Gastrocnemius medialis (tissue), 4 donors: ENCODE measurements at regions of chr13 and their contacts with region 1.

Region 1: GRCh38 chr13:102845630-102846260 is at the start of gene ERCC5:
- DNase-seq: peak; percentile 85 to 91
- ATAC-seq: peak; percentile 90 to 92
- H3K4me3 ChIP-seq: peak within 1 kb of the TSS; percentile 75 to 94 (median 92)
- H3K27ac ChIP-seq: peak within 1 kb of the TSS; percentile 92 to 98 (median 96)
- H3K4me1 ChIP-seq: peaks cover 19 to 21% of the 10 kb centered on the region in 2 donors
- H3K27me3 ChIP-seq: no peaks in the 10 kb centered on the region
- CTCF ChIP-seq: peak in 1 of 5 experiments; percentile 42
- POLR2A ChIP-seq: peak; percentile 63 to 70
- total RNA-seq, gene ERCC5: 43.5 to 77.7 (median 46.8) TPM

Region 2: GRCh38 chr13:102207680-102208342 is 637.9 kb before region 1 on chr13:
- in situ Hi-C with region 1: no loop called
- intact Hi-C with region 1: loop called (anchors 5 kb)
- DNase-seq: no peak
- ATAC-seq: no peak
- H3K4me3 ChIP-seq: no peak overlapping the region
- H3K27ac ChIP-seq: no peak overlapping the region
- H3K4me1 ChIP-seq: no peaks in the 10 kb centered on the region
- H3K27me3 ChIP-seq: no peaks in the 10 kb centered on the region
- CTCF ChIP-seq: no peak
- POLR2A ChIP-seq: no peak

Region 3: DNA sequence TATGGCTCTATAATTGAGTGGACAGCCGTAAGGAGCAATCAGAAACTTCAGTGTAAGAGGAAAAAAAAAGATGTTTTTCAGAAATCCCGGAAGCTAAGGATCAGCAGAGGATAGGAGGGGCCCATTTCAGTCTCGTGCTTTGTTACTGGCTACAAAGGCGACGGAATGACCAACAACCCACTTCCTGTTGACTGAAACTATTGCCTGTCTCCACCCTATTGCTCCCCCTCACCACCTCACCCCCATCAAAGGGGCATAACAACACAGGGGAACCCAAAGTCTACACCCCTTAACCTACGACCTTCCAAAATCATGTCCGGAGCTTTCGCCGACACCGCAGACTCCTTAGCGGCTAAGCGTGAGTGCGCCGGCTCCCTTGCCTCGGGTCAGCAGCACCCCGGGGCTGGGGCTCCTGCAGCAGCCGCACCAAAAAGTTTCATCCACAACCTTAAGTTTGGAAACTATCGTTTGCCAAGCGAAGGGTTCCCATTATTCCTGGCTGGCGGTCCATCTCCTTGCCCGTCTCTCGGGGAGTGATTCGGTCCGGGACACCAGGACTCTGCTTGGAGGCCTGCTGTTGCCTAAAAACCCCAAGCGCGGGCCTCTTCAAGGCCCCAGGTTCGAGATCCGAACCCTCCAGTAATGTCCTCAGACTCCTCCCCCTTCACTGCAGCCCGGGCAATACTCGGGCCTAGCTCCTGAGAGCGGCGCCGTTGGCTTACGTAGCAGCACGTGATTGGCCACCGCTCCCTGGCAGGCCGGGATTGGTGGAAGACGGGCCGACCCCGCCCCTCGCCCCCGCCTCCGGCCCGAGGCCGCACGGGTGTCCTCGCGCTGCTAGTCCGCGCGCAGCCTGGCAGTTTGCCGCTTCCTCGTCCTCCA is 249.4 kb before region 1 on chr13 and contains the start of gene TPP2:
- in situ Hi-C with region 1: loop called in 1 of 4 experiments (anchors 5 kb)
- intact Hi-C with region 1: loop called (anchors 1 kb)
- DNase-seq: peak; percentile 99
- ATAC-seq: peak; percentile 88 to 89
- H3K4me3 ChIP-seq: peak within 1 kb of the TSS; percentile 63 to 99 (median 86)
- H3K27ac ChIP-seq: peak within 1 kb of the TSS; percentile 93 to 100 (median 96)
- H3K4me1 ChIP-seq: peaks cover 42 to 48% of the 10 kb centered on the region in 2 donors
- H3K27me3 ChIP-seq: no peaks in the 10 kb centered on the region
- CTCF ChIP-seq: peak in 1 of 5 experiments; percentile 8
- POLR2A ChIP-seq: peak; percentile 92
- total RNA-seq, gene TPP2: 38.2 to 78.2 (median 68.1) TPM

Region 4: GRCh38 chr13:102724923-102725322 is 120.8 kb before region 1 on chr13:
- in situ Hi-C with region 1: no loop called
- intact Hi-C with region 1: loop called (anchors 2 kb)
- DNase-seq: no peak
- ATAC-seq: peak; percentile 37 to 67
- H3K4me3 ChIP-seq: no peak overlapping the region
- H3K27ac ChIP-seq: no peak overlapping the region
- H3K4me1 ChIP-seq: peaks cover 9 to 11% of the 10 kb centered on the region in 2 donors
- H3K27me3 ChIP-seq: no peaks in the 10 kb centered on the region
- CTCF ChIP-seq: peak; percentile 56 to 73 (median 66)
- POLR2A ChIP-seq: no peak

Region 5: DNA sequence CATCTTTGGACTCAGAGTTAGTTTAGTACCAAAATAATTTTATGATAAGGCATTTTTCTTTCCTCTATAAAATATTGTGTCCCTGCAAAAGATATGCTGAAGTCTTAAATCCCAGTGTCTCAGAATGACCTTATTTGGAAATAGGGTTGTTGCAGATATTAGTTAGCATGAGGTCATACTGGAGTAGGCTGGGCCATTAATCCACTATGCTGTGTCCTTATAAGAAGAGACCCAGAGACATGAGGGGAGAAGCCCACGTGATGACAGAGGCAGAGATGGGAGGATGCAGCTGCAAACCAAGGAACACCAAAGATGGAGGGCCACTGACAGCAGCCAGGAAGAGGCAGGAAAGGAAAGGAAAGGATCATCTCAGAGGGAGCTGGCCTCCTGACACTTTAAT is 53.3 kb before region 1 on chr13:
- in situ Hi-C with region 1: no loop called
- intact Hi-C with region 1: no loop called
- DNase-seq: no peak
- ATAC-seq: no peak
- H3K4me3 ChIP-seq: no peak overlapping the region
- H3K27ac ChIP-seq: no peak overlapping the region
- H3K4me1 ChIP-seq: no peaks in the 10 kb centered on the region
- H3K27me3 ChIP-seq: no peaks in the 10 kb centered on the region
- CTCF ChIP-seq: no peak
- POLR2A ChIP-seq: no peak

Region 6: GRCh38 chr13:102863590-102863989 is 17.8 kb after region 1 on chr13:
- in situ Hi-C with region 1: no loop called
- intact Hi-C with region 1: loop called (anchors 2 kb)
- DNase-seq: peak; percentile 84 to 93
- ATAC-seq: peak; percentile 100
- H3K4me3 ChIP-seq: no peak overlapping the region
- H3K27ac ChIP-seq: peak overlapping the region; percentile 49 to 79 (median 68)
- H3K4me1 ChIP-seq: peaks cover 24 to 30% of the 10 kb centered on the region in 2 donors
- H3K27me3 ChIP-seq: no peaks in the 10 kb centered on the region
- CTCF ChIP-seq: no peak
- POLR2A ChIP-seq: no peak

Region 7: DNA sequence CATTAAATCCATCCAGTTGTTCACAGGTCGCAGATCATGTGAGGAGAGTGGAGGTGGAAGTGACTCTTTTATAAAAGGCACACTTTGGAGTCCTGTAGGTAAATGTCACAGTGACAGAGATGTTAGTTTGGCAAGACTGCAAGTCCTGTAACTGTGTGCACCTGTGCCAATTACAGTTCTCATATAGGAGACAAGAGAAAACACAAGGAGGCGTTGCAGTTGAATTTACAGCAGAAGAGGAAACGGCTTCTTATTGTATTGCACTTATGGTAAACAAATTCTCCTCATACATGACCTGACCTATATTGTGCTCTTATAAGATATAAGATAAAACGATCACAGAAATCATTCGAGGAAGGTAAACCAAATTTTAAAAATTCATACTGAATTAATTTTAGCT is 953.3 kb after region 1 on chr13:
- in situ Hi-C with region 1: no loop called
- intact Hi-C with region 1: no loop called
- DNase-seq: no peak
- ATAC-seq: no peak
- H3K4me3 ChIP-seq: no peak overlapping the region
- H3K27ac ChIP-seq: no peak overlapping the region
- H3K4me1 ChIP-seq: no peaks in the 10 kb centered on the region
- H3K27me3 ChIP-seq: no peaks in the 10 kb centered on the region
- CTCF ChIP-seq: no peak
- POLR2A ChIP-seq: no peak